Activated CD8-positive, alpha-beta T cell treated with anti-CD3 and anti-CD28 coated beads for 36 hours (primary cell): ENCODE measurements at regions of chr9 and their contacts with region 1.

Region 1: GRCh38 chr9:98998441-98999151 is 54.9 kb downstream of the COL15A1 start:
- DNase-seq: peak; percentile 76
- ATAC-seq: peak; percentile 74
- H3K4me3 Mint-ChIP-seq: no peak overlapping the region
- H3K27ac Mint-ChIP-seq: no peak overlapping the region
- H3K4me1 Mint-ChIP-seq: peaks cover 16% of the 10 kb centered on the region
- H3K27me3 Mint-ChIP-seq: peaks cover 1% of the 10 kb centered on the region
- CTCF ChIP-seq: peak; percentile 94

Region 2: DNA sequence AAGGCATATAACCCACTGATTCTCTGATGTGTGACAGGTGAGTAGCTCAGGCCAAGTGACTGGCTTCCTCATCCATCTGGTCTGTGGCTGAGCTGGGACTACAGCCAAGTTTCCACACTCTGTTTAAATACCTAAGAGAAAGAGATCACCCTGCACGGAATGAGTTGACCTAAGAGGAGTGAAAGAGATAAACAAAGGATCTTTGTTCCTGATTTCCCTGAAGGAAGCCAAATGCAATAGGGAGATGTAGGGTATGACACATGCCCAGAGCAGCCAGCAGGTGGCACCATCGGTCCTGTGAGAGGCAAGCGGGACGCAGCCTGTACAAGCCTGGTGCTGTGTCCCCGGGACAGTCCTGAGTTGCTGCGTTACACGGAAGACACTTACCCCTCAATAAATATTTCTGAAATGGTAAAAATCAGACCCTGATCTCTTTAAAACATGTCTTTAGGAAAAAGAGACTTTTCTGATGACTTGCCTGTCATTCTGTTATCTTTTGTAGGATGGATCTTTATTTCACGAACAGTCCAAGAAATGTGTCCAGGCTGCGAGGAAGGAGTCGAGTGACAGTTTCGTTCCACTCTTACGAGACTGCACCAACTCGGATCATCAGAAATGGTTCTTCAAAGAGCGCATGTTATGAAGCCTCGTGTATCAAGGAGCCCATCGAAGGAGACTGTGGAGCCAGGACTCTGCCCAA is 150.0 kb before region 1 on chr9:
- CTCF ChIA-PET with region 1: interaction called, 56 read pairs
- POLR2A ChIA-PET with region 1: no interaction called
- intact Hi-C with region 1: loop called (anchors 5 kb)
- DNase-seq: peak; percentile 87
- ATAC-seq: peak; percentile 95
- H3K4me3 Mint-ChIP-seq: no peak overlapping the region
- H3K27ac Mint-ChIP-seq: no peak overlapping the region
- H3K4me1 Mint-ChIP-seq: peaks cover 11% of the 10 kb centered on the region
- H3K27me3 Mint-ChIP-seq: no peaks in the 10 kb centered on the region
- CTCF ChIP-seq: peak; percentile 95

Region 3: DNA sequence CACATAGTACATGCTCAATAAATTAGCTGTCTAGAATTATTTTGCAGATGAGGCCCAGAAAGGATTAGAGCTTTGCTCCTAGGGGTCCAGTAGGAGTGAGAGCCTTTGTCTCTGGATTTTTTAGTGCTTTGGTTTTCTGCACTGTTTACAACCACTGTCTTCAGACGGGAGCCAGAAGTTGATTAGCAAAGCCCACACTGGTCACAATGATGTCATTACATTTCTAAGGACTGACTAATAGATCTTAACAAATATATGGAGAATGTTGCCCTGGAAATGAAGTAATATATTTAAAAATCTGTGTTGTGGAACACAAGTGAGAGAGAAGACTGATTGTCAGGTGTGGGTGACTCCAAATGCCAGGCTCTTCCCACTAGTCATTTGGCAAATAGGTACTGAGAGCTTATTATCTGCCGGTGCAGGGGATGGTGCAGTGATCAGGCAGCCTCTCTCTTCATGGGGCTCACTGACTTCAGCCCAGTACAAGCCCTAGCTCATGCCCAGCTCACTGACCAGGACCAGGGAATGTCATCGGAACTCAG is 21.3 kb after region 1 on chr9:
- CTCF ChIA-PET with region 1: interaction called, 97 read pairs
- POLR2A ChIA-PET with region 1: no interaction called
- intact Hi-C with region 1: no loop called
- DNase-seq: no peak
- ATAC-seq: no peak
- H3K4me3 Mint-ChIP-seq: no peak overlapping the region
- H3K27ac Mint-ChIP-seq: no peak overlapping the region
- H3K4me1 Mint-ChIP-seq: peaks cover 4% of the 10 kb centered on the region
- H3K27me3 Mint-ChIP-seq: no peaks in the 10 kb centered on the region
- CTCF ChIP-seq: no peak

Region 4: DNA sequence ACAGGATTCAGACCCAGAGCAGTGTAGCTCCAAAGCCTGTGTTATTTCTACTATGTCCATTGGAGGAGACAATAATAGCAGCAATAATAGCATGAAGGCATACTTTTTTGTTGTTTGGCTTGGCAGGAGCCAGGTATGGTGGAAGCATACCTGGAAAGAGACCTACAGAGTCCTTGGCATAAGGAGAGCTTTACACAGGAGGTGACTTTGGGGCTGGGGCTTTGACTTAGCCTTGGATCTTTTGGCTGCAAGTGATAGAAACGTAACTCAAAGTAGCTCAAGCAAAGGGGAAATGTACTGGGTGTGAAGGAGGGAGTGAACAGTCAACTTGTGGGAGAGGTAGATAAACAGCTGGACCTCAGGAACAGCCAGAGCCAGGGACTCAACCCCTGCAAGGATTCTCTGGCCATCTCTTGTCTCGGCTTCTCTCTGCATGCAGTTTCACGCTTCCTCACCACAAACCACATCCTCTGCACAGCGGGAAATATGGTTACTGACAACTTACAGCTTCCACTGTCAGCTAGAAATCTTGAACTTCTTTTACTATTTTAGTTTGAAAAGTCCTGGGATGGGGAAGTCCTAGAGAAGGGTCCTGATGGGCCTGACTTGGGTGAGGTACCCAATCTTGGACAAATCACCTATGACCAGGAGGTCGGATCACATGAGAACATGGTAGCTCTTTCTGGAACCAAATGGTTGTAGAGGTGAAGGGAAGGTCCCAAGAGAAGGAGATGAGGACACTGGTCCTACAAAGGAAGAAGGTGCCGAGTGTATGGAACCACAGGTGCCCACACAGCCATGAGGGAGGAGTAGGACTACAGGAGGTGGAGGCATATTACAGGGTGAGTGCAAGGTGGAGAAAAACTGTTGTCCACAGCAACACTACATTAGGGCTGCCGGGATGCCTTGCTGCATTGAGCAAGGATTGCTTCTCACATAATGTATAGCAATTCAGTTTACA is 59.3 kb after region 1 on chr9:
- CTCF ChIA-PET with region 1: interaction called, 18 read pairs
- POLR2A ChIA-PET with region 1: no interaction called
- intact Hi-C with region 1: no loop called
- DNase-seq: peak; percentile 94
- ATAC-seq: peak; percentile 43
- H3K4me3 Mint-ChIP-seq: peak overlapping the region; percentile 63
- H3K27ac Mint-ChIP-seq: peak overlapping the region; percentile 86
- H3K4me1 Mint-ChIP-seq: peaks cover 63% of the 10 kb centered on the region
- H3K27me3 Mint-ChIP-seq: peaks cover 4% of the 10 kb centered on the region
- CTCF ChIP-seq: no peak

Region 5: DNA sequence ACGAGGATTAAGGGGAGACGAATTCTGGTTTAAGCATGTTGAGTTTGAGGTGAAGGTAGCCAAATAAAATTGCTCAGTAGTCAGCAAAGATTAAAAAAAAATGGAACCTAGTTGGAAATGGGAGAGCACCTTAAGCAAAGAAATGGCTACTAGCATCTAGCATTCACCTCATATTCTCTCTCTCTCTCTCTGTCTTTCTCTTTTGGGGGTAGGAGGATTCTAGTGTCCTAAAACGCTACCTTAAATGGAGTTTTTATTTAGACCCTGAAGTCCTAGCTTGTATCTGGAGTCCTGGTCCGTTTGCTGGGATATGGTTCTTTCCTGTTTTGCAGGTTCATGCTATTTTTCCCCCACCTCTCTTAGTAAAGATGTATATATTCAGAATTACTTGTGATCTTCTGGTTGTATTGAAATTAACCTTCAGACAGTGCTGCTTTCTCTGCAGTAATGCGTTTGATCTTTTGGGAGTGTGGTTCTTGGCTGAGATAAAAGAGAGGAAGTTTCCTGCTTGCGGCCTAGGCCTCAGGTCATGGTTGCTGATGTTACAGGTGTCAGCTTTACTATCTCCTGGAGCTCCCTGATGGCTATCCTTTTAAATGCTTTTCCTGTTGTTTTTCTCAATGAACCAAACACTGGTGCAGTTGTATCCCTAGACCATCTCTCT is 114.3 kb after region 1 on chr9:
- CTCF ChIA-PET with region 1: interaction called, 10 read pairs
- POLR2A ChIA-PET with region 1: no interaction called
- intact Hi-C with region 1: no loop called
- DNase-seq: peak; percentile 65
- ATAC-seq: peak; percentile 87
- H3K4me3 Mint-ChIP-seq: peak overlapping the region; percentile 35
- H3K27ac Mint-ChIP-seq: peak overlapping the region; percentile 47
- H3K4me1 Mint-ChIP-seq: peaks cover 91% of the 10 kb centered on the region
- H3K27me3 Mint-ChIP-seq: no peaks in the 10 kb centered on the region
- CTCF ChIP-seq: no peak